ENCODE measurements at regions of chr2 and their contacts with region 1.

Region 1: DNA sequence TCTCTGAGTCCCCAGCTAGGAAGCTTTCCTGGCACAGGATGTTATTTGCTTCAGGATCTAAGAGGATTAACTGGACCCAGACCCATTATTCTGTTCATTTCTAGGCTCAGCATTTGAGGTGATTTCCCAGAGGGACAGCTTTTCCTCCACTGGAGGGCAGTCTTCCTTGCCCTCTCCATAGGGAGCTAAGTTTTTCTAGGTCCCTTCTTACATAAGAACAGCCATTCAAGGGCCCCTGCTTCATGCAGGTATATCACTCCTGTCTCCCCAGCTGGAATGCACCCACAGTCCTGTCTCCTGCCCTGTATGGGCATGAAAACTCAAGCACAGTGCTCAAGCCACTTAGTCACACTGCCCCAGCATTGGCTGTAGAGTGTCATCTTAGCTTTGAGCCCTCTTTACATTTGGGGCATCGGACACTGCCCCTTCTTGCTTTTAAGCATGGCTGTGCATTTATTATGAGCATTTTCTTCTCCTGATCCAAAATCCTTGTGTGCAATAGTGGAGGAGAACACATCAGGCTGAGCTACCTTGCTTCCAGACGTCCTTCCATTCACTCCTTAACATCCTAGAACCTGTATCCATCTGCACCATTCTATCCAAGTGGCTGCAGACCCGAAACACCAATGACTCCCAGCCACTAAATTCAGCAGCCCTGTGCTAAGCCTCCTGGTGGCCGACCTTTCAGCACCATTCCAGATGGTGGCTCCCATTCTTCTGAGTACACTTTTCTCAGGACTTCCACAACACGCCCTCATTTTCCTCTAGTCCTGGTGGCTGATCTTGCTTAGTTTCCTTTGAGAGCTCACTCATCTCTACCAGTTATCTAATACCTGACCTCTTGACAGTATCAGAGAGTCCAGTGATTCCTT is 80.0 kb downstream of the COPS8 start:
- DNase-seq: no peak
- H3K4me3 ChIP-seq: no peak overlapping the region
- CTCF ChIP-seq: peak; percentile 53

Region 2: GRCh38 chr2:236217926-236218325 is 947.7 kb before region 1 on chr2:
- CTCF ChIA-PET with region 1: no interaction called
- POLR2A ChIA-PET with region 1: no interaction called
- DNase-seq: no peak
- H3K4me3 ChIP-seq: no peak overlapping the region
- CTCF ChIP-seq: no peak

Region 3: DNA sequence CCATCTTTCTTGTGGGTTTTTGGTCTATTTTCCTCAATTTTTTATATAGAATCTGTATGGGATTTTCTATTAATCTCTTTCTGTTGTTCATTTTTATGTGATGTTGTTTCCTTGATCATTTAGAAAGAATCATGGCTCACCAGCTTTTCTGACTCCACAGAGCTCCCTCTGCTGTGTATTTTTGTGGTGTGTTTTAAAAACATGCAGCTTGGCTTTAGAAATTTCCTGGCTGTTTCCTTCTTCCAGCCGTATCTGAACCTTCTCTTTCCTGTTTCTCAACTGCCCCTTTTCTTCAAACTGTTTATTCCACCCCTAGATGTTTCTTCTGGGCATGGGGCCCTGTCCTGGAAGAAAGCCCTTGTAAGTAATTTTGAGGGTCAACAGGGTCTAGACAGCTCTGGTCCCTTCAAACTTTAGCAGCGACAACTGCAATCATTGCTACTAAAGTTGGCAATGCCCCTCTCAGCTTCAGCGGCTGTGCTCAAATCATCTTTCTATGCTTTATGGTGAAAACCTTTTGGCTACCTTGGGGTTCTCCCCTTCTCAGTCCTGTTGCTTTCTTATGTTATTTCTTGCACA is 97.6 kb before region 1 on chr2:
- CTCF ChIA-PET with region 1: no interaction called
- POLR2A ChIA-PET with region 1: no interaction called
- DNase-seq: no peak
- H3K4me3 ChIP-seq: no peak overlapping the region
- CTCF ChIP-seq: no peak

Region 4: GRCh38 chr2:237190966-237191713 is 25.5 kb after region 1 on chr2:
- CTCF ChIA-PET with region 1: interaction called, 10 read pairs
- POLR2A ChIA-PET with region 1: no interaction called
- DNase-seq: no peak
- H3K4me3 ChIP-seq: no peak overlapping the region
- CTCF ChIP-seq: no peak

Region 5: DNA sequence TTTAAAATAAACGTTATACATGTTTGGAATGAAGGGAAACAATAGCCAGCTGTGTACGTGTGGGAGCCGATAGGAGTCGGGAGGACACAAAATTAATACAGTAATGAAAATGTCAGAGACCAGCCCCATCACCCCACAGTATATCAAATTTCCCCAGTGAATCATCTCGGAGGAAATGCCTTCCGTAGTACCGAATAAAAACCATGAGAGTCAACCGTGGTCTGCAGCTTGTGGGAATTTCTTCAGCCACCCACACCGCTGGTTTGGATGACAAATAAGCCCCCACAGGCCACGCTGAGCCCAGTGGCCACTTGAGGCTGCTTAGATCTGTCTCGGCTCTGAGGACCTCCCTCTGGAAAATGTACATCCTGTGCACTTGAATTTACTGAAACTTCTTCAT is 114.6 kb after region 1 on chr2:
- CTCF ChIA-PET with region 1: interaction called, 18 read pairs
- POLR2A ChIA-PET with region 1: no interaction called
- DNase-seq: peak; percentile 90
- H3K4me3 ChIP-seq: no peak overlapping the region
- CTCF ChIP-seq: no peak

Region 6: DNA sequence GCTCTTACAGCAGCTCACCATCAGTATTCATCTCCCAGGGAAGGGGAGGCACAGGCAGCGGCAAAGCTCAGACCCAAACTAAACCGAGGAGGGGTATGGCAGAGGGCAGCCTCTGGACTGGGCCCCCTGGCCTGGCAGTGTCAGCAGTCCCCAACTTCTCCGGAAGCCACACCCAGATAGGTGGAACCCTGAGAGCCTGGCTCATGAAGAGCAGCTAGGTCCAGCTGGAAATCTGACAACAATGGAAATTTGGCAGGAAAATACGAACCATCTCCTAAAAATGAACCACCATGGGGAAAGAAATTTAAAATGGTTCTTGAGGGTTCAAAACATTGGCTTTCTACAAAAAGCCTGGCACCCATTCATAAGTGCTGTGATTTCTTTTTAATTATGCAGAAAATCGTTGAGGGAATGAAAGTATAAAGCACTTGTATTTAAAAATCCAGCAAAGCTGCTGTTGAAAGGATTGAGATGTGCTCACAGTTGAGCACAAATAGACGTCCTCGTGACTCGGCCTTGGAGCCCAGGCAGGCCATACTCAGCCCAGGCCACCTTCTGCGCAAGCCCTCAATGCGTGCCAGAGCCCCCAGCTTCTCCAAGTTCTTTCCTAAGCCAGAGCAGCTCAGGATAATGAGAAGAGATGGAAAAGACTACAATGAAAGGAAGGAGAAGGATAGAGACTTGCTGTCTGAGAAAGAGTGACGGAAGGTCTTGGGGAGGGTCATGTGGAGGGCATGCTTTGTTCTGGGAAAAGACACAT is 155.3 kb after region 1 on chr2:
- CTCF ChIA-PET with region 1: interaction called, 35 read pairs
- POLR2A ChIA-PET with region 1: no interaction called
- DNase-seq: no peak
- H3K4me3 ChIP-seq: no peak overlapping the region
- CTCF ChIP-seq: no peak

Region 7: GRCh38 chr2:237341872-237342271 is 176.2 kb after region 1 on chr2:
- CTCF ChIA-PET with region 1: interaction called, 23 read pairs
- POLR2A ChIA-PET with region 1: no interaction called
- DNase-seq: no peak
- H3K4me3 ChIP-seq: no peak overlapping the region
- CTCF ChIP-seq: no peak

Region 8: GRCh38 chr2:237413777-237414661 is 248.4 kb after region 1 on chr2 and contains the start of gene COL6A3:
- CTCF ChIA-PET with region 1: interaction called, 27 read pairs
- POLR2A ChIA-PET with region 1: no interaction called
- DNase-seq: peak; percentile 81
- H3K4me3 ChIP-seq: peak within 1 kb of the TSS; percentile 95
- CTCF ChIP-seq: no peak

Measured in AG04449 (cell line).